ENCODE measurements at regions of chr1 and their contacts with region 1.

Region 1: GRCh38 chr1:235093696-235094592 is 34.7 kb downstream of the TOMM20 start:
- ATAC-seq: peak; percentile 48 to 81 (median 66)
- H3K4me3 ChIP-seq: peak overlapping the region in 3 of 5 donors; percentile 1 to 15 (median 4)
- H3K27ac ChIP-seq: peak overlapping the region; percentile 4 to 35
- H3K4me1 ChIP-seq: peaks cover 25 to 30% of the 10 kb centered on the region in 2 donors

Region 2: GRCh38 chr1:234125283-234125682 is 968.7 kb before region 1 on chr1:
- in situ Hi-C with region 1: loop called in 3 of 9 experiments (anchors 25 kb)
- ATAC-seq: peak in 7 of 8 experiments; percentile 21 to 81 (median 63)
- H3K4me3 ChIP-seq: no peak overlapping the region
- H3K27ac ChIP-seq: no peak overlapping the region
- H3K4me1 ChIP-seq: peaks cover 2 to 18% of the 10 kb centered on the region in 2 donors

Region 3: GRCh38 chr1:234499119-234499942 is 594.6 kb before region 1 on chr1:
- in situ Hi-C with region 1: loop called (anchors 10 to 25 kb)
- ATAC-seq: peak; percentile 56 to 98 (median 96)
- H3K4me3 ChIP-seq: peak overlapping the region in 2 of 5 donors; percentile 1 to 3
- H3K27ac ChIP-seq: peak overlapping the region in 1 of 2 donors; percentile 67
- H3K4me1 ChIP-seq: peaks cover 15 to 32% of the 10 kb centered on the region in 2 donors

Region 4: GRCh38 chr1:234610348-234611152 is 483.4 kb before region 1 on chr1:
- in situ Hi-C with region 1: loop called in 7 of 9 experiments (anchors 5 to 25 kb)
- ATAC-seq: peak; percentile 46 to 76 (median 69)
- H3K4me3 ChIP-seq: peak overlapping the region; percentile 47 to 72 (median 58)
- H3K27ac ChIP-seq: peak overlapping the region; percentile 97 to 98
- H3K4me1 ChIP-seq: peaks cover 36 to 39% of the 10 kb centered on the region in 2 donors

Region 5: DNA sequence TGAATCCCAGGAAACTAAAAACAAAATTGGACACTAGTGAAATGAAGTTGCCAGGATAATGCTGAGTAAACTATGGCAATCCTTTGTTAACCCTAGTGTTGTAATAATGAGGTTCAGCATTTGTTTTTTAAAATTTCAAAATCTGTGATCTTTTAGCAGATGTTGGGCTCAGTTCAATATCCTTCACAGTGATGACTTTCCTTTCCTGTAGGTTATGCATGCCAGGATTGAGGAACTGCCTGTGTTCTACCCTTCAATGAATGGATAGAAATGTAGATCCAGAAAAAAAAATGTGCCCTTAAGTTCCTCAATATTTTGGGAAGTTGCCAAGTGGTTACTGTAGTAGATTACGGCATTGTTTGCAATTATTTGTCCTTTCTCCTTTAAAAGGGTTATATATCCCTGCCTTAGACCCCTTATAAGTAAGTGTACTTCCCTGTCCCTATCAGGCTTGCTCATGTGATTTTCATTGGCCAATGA is 448.4 kb before region 1 on chr1:
- in situ Hi-C with region 1: no loop called
- ATAC-seq: no peak
- H3K4me3 ChIP-seq: no peak overlapping the region
- H3K27ac ChIP-seq: no peak overlapping the region
- H3K4me1 ChIP-seq: peaks cover 0 to 4% of the 10 kb centered on the region in 2 donors

Region 6: GRCh38 chr1:234730770-234731568 is 363.0 kb before region 1 on chr1:
- in situ Hi-C with region 1: loop called in 4 of 9 experiments (anchors 25 kb)
- ATAC-seq: peak; percentile 44 to 84 (median 78)
- H3K4me3 ChIP-seq: no peak overlapping the region
- H3K27ac ChIP-seq: no peak overlapping the region
- H3K4me1 ChIP-seq: peaks cover 34 to 49% of the 10 kb centered on the region in 2 donors

Region 7: DNA sequence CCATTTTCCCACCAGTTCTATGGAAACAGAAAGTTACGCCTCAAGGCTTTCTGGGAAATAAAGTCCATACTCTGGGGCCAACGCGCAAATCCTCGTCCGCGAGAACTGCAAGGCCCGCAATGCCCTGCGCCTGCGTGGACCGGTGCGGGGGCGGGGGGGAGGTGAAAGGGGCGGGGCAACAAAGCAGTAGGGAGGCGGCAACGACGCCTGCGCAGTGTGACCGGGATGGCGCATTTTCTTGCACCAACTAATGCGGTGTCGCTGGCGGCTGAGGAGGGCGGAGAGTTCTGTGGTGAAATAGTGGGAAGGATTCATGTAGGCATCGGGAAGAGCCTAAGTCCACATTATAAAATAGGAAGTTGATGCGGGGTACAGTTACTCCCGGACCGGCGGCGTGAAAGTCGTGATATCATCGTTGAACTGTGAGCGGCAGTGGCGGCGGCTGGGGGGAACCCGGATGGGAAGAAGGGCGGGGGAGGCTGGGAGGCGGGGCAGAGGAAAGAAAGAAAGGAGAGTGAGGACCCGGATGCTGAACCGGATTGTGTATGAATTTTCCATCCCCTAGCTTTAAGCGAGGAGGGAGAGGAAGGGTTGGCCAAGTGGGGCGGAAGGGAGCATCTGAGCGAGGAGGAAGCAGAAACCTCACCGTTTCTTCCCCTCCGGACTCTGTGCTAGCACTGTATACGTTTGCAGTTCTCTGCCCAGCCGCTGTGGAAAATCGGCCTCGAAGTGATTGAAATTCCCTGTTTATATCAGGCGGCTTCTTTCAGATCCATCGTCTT is 234.6 kb after region 1 on chr1 and contains the start of gene GGPS1:
- in situ Hi-C with region 1: no loop called
- ATAC-seq: peak; percentile 65 to 86 (median 77)
- H3K4me3 ChIP-seq: peak within 1 kb of the TSS; percentile 82 to 98 (median 98)
- H3K27ac ChIP-seq: peak within 1 kb of the TSS; percentile 94 to 97
- H3K4me1 ChIP-seq: peaks cover 16 to 32% of the 10 kb centered on the region in 2 donors
- total RNA-seq, gene GGPS1: 25.9 to 52.5 (median 47.1) TPM

Measured in motor neuron (in vitro differentiated cells).